GM12878 (cell line): ENCODE measurements at regions of chr4 and their contacts with region 1.

Region 1: GRCh38 chr4:42871671-42872290 is 20.7 kb upstream of the GRXCR1 start:
- DNase-seq: no peak
- ATAC-seq: no peak
- H3K4me3 ChIP-seq: no peak overlapping the region
- H3K27ac ChIP-seq: no peak overlapping the region
- H3K4me1 ChIP-seq: no peaks in the 10 kb centered on the region
- H3K27me3 ChIP-seq: no peaks in the 10 kb centered on the region
- CTCF ChIP-seq: no peak
- EP300 ChIP-seq: no peak
- POLR2A ChIP-seq: no peak
- RAD21 ChIP-seq: no peak

Region 2: GRCh38 chr4:42562016-42562415 is 309.8 kb before region 1 on chr4:
- CTCF ChIA-PET with region 1: interaction called, 6 read pairs
- POLR2A ChIA-PET with region 1: no interaction called
- RAD21 ChIA-PET with region 1: no interaction called
- SMC1A ChIA-PET with region 1: no interaction called
- in situ Hi-C with region 1: loop called (anchors 5 kb)
- intact Hi-C with region 1: no loop called
- DNase-seq: no peak
- ATAC-seq: peak; percentile 31; the same call in 1 of the 3 replicates
- H3K4me3 ChIP-seq: no peak overlapping the region
- H3K27ac ChIP-seq: no peak overlapping the region
- H3K4me1 ChIP-seq: no peaks in the 10 kb centered on the region
- H3K27me3 ChIP-seq: no peaks in the 10 kb centered on the region
- CTCF ChIP-seq: no peak
- EP300 ChIP-seq: no peak
- POLR2A ChIP-seq: 0 out of 2 replicates have a peak, but pooled peaks have one; percentile 11
- RAD21 ChIP-seq: no peak

Region 3: GRCh38 chr4:42942216-42942615 is 70.4 kb after region 1 on chr4:
- CTCF ChIA-PET with region 1: no interaction called
- POLR2A ChIA-PET with region 1: no interaction called
- RAD21 ChIA-PET with region 1: no interaction called
- SMC1A ChIA-PET with region 1: no interaction called
- in situ Hi-C with region 1: no loop called
- intact Hi-C with region 1: no loop called
- DNase-seq: no peak
- ATAC-seq: no peak
- H3K4me3 ChIP-seq: no peak overlapping the region
- H3K27ac ChIP-seq: no peak overlapping the region
- H3K4me1 ChIP-seq: no peaks in the 10 kb centered on the region
- H3K27me3 ChIP-seq: no peaks in the 10 kb centered on the region
- CTCF ChIP-seq: no peak
- EP300 ChIP-seq: no peak
- POLR2A ChIP-seq: no peak
- RAD21 ChIP-seq: no peak